ENCODE measurements at regions of chr10 and their contacts with region 1.

Region 1: DNA sequence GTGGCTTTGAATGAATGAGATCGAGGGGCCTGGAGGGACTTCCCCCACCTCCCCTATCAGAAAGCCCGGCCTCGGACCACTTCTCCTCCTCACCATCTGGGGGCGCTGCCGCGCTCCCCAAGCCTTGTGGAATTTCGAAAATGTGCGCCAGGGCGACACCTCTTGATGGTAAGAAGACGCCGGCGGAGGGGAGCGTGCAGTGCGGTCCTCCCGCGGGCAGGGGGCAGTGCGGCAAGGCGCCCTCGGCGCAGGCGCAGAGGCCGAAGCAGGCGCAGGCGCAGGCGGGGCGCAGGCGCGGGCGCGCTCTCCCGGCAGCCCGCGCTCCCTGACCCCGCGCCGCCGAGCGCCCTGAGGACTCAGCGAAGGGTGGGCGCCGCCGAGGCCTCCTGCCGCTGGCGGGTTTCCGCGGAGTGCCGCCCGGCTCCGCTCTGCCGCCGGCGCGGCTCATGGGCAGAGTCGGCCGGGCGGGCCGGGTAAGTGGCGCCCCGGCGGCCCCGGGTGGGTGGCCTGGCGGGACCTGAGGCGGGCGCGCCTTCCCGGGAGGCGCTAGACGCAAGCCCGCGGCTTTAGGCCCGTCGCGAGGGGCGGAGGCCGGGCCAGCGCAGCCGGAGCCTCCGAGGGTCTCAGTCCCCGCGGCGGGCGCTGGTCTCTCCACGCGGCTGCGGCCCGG is at the start of gene RBM17:
- DNase-seq: peak; percentile 98
- ATAC-seq: peak; percentile 85
- H3K4me3 Mint-ChIP-seq: peak within 1 kb of the TSS; percentile 98
- H3K27ac Mint-ChIP-seq: peak within 1 kb of the TSS; percentile 88
- H3K4me1 Mint-ChIP-seq: peaks cover 79% of the 10 kb centered on the region
- H3K27me3 Mint-ChIP-seq: no peaks in the 10 kb centered on the region
- total RNA-seq, gene RBM17: 213 to 217 TPM

Region 2: GRCh38 chr10:6033954-6034353 is 54.9 kb before region 1 on chr10:
- CTCF ChIA-PET with region 1: interaction called, 34 read pairs
- POLR2A ChIA-PET with region 1: interaction called, 8 read pairs
- DNase-seq: no peak
- ATAC-seq: no peak
- H3K4me3 Mint-ChIP-seq: no peak overlapping the region
- H3K27ac Mint-ChIP-seq: peak overlapping the region; percentile 15
- H3K4me1 Mint-ChIP-seq: peaks cover 65% of the 10 kb centered on the region
- H3K27me3 Mint-ChIP-seq: no peaks in the 10 kb centered on the region

Region 3: GRCh38 chr10:6050801-6051445 is 37.9 kb before region 1 on chr10:
- CTCF ChIA-PET with region 1: interaction called, 81 read pairs
- POLR2A ChIA-PET with region 1: interaction called, 23 read pairs
- DNase-seq: peak; percentile 96
- ATAC-seq: peak; percentile 74
- H3K4me3 Mint-ChIP-seq: peak overlapping the region; percentile 88
- H3K27ac Mint-ChIP-seq: peak overlapping the region; percentile 98
- H3K4me1 Mint-ChIP-seq: peaks cover 85% of the 10 kb centered on the region
- H3K27me3 Mint-ChIP-seq: no peaks in the 10 kb centered on the region

Region 4: GRCh38 chr10:6068422-6068821 is 20.4 kb before region 1 on chr10:
- CTCF ChIA-PET with region 1: interaction called, 370 read pairs
- POLR2A ChIA-PET with region 1: interaction called, 158 read pairs
- DNase-seq: peak; percentile 81
- ATAC-seq: peak; percentile 77
- H3K4me3 Mint-ChIP-seq: peak overlapping the region; percentile 74
- H3K27ac Mint-ChIP-seq: peak overlapping the region; percentile 95
- H3K4me1 Mint-ChIP-seq: peaks cover 94% of the 10 kb centered on the region
- H3K27me3 Mint-ChIP-seq: no peaks in the 10 kb centered on the region

Region 5: GRCh38 chr10:6151087-6151977 is 62.5 kb after region 1 on chr10:
- CTCF ChIA-PET with region 1: interaction called, 15 read pairs
- POLR2A ChIA-PET with region 1: no interaction called
- DNase-seq: peak; percentile 73
- ATAC-seq: peak; percentile 84
- H3K4me3 Mint-ChIP-seq: peak overlapping the region; percentile 67
- H3K27ac Mint-ChIP-seq: peak overlapping the region; percentile 86
- H3K4me1 Mint-ChIP-seq: peaks cover 62% of the 10 kb centered on the region
- H3K27me3 Mint-ChIP-seq: no peaks in the 10 kb centered on the region

Region 6: DNA sequence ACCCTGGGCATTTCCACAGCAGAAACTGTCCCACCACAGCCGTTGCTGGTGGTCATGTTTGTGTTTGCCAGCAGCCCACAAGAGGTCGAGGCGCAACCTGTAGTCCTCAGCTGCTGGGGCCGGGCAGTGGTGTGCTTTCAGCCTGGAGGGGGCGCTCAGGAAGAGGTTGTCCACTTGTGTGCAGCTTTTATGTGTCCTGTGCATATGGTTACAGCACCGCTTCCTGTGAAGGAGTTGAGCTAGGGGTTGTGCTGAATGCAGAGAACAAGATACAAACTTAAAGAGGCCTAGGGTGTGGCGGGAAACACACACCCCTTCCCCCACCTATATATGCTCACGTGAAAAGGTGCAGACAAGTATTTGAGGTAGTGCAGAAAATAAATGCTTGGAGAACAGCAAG is 84.3 kb after region 1 on chr10:
- CTCF ChIA-PET with region 1: no interaction called
- POLR2A ChIA-PET with region 1: no interaction called
- DNase-seq: peak; percentile 86
- ATAC-seq: peak; percentile 95
- H3K4me3 Mint-ChIP-seq: no peak overlapping the region
- H3K27ac Mint-ChIP-seq: peak overlapping the region; percentile 75
- H3K4me1 Mint-ChIP-seq: peaks cover 69% of the 10 kb centered on the region
- H3K27me3 Mint-ChIP-seq: no peaks in the 10 kb centered on the region

Region 7: GRCh38 chr10:6320320-6321010 is 231.6 kb after region 1 on chr10:
- CTCF ChIA-PET with region 1: no interaction called
- POLR2A ChIA-PET with region 1: no interaction called
- DNase-seq: peak; percentile 33
- ATAC-seq: no peak
- H3K4me3 Mint-ChIP-seq: no peak overlapping the region
- H3K27ac Mint-ChIP-seq: no peak overlapping the region
- H3K4me1 Mint-ChIP-seq: peaks cover 11% of the 10 kb centered on the region
- H3K27me3 Mint-ChIP-seq: no peaks in the 10 kb centered on the region

Measured in activated CD8-positive, alpha-beta T cell treated with anti-CD3 and anti-CD28 coated beads, Interleukin-2, amount 10 ng/mL, durations not matched to agents 7 days and 5 days (primary cell).